ENCODE measurements at regions of chr10 and their contacts with region 1.

Region 1: GRCh38 chr10:118409295-118409694 is 67.2 kb upstream of the FAM204A start:
- DNase-seq: no peak
- ATAC-seq: no peak
- H3K4me3 ChIP-seq: no peak overlapping the region
- H3K27ac ChIP-seq: no peak overlapping the region
- H3K4me1 ChIP-seq: no peaks in the 10 kb centered on the region
- H3K27me3 ChIP-seq: peaks cover 0 to 3% (median 0%) of the 10 kb centered on the region in 3 donors
- CTCF ChIP-seq: no peak

Region 2: GRCh38 chr10:118374404-118374803 is 34.9 kb before region 1 on chr10:
- intact Hi-C with region 1: loop called in 1 of 2 experiments (anchors 1 kb)
- DNase-seq: no peak
- ATAC-seq: no peak
- H3K4me3 ChIP-seq: no peak overlapping the region
- H3K27ac ChIP-seq: no peak overlapping the region
- H3K4me1 ChIP-seq: no peaks in the 10 kb centered on the region
- H3K27me3 ChIP-seq: peaks cover 0 to 2% (median 0%) of the 10 kb centered on the region in 3 donors
- CTCF ChIP-seq: no peak

Region 3: GRCh38 chr10:118504044-118504874 is 95.0 kb after region 1 on chr10:
- intact Hi-C with region 1: no loop called
- DNase-seq: no peak
- ATAC-seq: no peak
- H3K4me3 ChIP-seq: no peak overlapping the region
- H3K27ac ChIP-seq: no peak overlapping the region
- H3K4me1 ChIP-seq: no peaks in the 10 kb centered on the region
- H3K27me3 ChIP-seq: peaks cover 0 to 6% (median 1%) of the 10 kb centered on the region in 3 donors
- CTCF ChIP-seq: no peak